ENCODE measurements at regions of chr7 and their contacts with region 1.

Region 1: GRCh38 chr7:134458806-134459698 is at the start of gene AKR1B1:
- DNase-seq: peak; percentile 100

Region 2: DNA sequence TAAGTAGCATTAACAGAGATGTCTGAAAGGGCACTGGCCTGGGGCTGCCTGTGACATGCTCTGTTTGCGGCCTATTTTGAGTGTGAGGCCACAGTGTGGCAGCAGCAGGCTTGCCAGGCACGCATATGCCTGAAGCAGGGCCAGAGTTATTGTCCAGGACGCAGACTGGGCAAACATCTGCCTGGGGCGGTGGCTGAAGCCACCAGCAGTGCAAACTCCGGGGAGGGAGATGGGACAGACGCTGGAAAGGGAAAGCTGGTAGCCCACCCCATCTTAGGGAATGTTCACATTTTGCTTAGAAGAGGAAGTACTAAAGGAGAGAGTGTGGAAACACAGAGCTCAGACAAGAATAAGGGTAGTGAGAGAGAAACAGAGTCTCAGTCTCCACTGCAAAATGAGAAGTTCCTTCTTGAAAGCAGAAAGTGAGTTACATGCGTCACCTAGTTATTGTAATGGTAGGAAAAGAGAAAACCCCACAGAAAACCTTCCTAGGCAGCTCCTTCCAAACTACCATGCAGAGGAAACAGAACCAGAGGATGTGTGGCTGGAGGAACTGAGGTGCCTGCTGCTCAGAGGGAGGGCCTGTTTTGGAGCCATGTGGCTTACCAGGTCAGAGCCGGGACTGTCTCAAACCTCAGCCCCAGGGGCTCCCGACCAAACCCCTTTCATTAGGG is 14.7 kb before region 1 on chr7:
- CTCF ChIA-PET with region 1: interaction called, 7 read pairs
- POLR2A ChIA-PET with region 1: interaction called, 16 read pairs
- DNase-seq: no peak

Region 3: GRCh38 chr7:134480736-134481135 is 21.7 kb after region 1 on chr7:
- CTCF ChIA-PET with region 1: interaction called, 18 read pairs
- POLR2A ChIA-PET with region 1: interaction called, 14 read pairs
- DNase-seq: no peak

Region 4: DNA sequence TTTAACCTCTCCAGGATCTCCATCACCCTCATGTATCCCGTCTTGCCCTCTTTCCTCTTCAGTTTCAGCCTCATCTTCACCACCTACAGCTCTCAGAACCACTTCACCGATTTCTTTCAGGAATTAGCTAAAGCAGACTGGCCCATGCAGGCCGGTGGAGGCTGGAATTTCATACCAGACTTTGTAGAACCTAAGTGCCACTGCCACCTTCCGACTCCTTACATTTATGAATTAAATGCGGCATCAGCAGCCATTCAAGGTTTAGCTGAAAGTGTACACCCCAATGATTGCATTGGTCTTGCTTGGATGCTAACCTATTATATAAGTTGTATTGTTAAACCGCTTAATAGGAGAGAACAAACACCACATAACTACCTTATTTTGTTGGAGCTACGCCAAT is 32.9 kb after region 1 on chr7:
- CTCF ChIA-PET with region 1: no interaction called
- POLR2A ChIA-PET with region 1: no interaction called
- DNase-seq: no peak